Activated CD4-positive, alpha-beta memory T cell treated with anti-CD3 and anti-CD28 coated beads for 36 hours (primary cell): ENCODE measurements at regions of chr6 and their contacts with region 1.

Region 1: GRCh38 chr6:85360794-85361642 is 88.9 kb upstream of the NT5E start:
- DNase-seq: no peak
- H3K4me3 Mint-ChIP-seq: no peak overlapping the region
- H3K27ac Mint-ChIP-seq: no peak overlapping the region
- H3K4me1 Mint-ChIP-seq: peaks cover 5% of the 10 kb centered on the region
- H3K27me3 Mint-ChIP-seq: peaks cover 4% of the 10 kb centered on the region

Region 2: GRCh38 chr6:85537055-85537494 is 176.1 kb after region 1 on chr6:
- CTCF ChIA-PET with region 1: interaction called, 18 read pairs
- POLR2A ChIA-PET with region 1: no interaction called
- intact Hi-C with region 1: no loop called
- DNase-seq: no peak
- H3K4me3 Mint-ChIP-seq: no peak overlapping the region
- H3K27ac Mint-ChIP-seq: no peak overlapping the region
- H3K4me1 Mint-ChIP-seq: no peaks in the 10 kb centered on the region
- H3K27me3 Mint-ChIP-seq: no peaks in the 10 kb centered on the region